Esophagus muscularis mucosa (tissue), 4 donors: ENCODE measurements at regions of chr3 and their contacts with region 1.

Region 1: GRCh38 chr3:124351430-124352148 is 359.7 kb upstream of the ROPN1 start:
- DNase-seq: no peak
- H3K4me3 ChIP-seq: no peak overlapping the region
- H3K27ac ChIP-seq: peak overlapping the region; percentile 42 to 66 (median 55)
- H3K4me1 ChIP-seq: peaks cover 3 to 24% (median 13%) of the 10 kb centered on the region in 4 donors
- H3K27me3 ChIP-seq: no peaks in the 10 kb centered on the region
- CTCF ChIP-seq: peak; percentile 57 to 72 (median 65)
- EP300 ChIP-seq: no peak
- POLR2A ChIP-seq: no peak

Region 2: GRCh38 chr3:124467980-124468902 is 116.7 kb after region 1 on chr3:
- intact Hi-C with region 1: loop called (anchors 1 kb)
- DNase-seq: no peak
- H3K4me3 ChIP-seq: no peak overlapping the region
- H3K27ac ChIP-seq: no peak overlapping the region
- H3K4me1 ChIP-seq: peaks cover 0 to 7% (median 0%) of the 10 kb centered on the region in 4 donors
- H3K27me3 ChIP-seq: no peaks in the 10 kb centered on the region
- CTCF ChIP-seq: peak; percentile 94 to 96 (median 95)
- EP300 ChIP-seq: no peak
- POLR2A ChIP-seq: no peak

Region 3: DNA sequence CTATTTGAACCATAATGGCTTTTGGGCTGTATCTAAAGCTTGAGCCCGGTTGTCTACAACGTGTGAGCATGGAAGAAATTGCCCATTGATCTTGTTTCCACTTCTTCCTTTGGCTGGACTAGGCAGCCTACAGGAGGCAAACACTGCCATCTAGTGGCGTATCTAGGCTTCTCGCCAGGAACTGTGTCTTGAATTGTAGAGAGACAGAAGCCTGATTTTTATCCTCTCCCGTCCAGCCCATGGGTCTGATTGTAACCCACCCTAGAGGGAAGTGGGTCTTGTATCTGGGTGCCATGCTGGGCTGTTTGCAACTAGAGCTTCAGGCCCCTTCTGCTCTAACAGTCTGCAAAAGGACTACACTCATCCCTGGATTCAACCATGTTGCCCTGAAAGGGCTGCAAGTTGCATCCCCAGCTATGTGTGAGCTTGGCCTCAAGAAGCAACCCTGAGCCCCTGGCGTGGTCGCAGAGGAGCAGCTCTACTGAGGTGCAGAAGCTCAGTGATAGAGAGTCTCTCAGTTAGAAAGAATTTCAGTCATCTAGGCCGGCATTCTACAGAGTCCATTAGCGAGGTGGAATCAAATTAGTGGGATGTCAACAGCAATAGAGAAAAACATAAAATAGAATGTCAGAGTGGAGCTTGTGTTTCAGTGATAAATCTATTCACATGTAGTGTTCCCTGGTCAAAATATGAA is 208.4 kb after region 1 on chr3:
- intact Hi-C with region 1: loop called (anchors 5 kb)
- DNase-seq: no peak
- H3K4me3 ChIP-seq: no peak overlapping the region
- H3K27ac ChIP-seq: peak overlapping the region; percentile 70 to 82 (median 78)
- H3K4me1 ChIP-seq: peaks cover 27 to 61% (median 61%) of the 10 kb centered on the region in 4 donors
- H3K27me3 ChIP-seq: no peaks in the 10 kb centered on the region
- CTCF ChIP-seq: peak; percentile 80 to 87 (median 86)
- EP300 ChIP-seq: no peak
- POLR2A ChIP-seq: no peak